Gastrocnemius medialis (tissue), 4 donors: ENCODE measurements at regions of chr11 and their contacts with region 1.

Region 1: DNA sequence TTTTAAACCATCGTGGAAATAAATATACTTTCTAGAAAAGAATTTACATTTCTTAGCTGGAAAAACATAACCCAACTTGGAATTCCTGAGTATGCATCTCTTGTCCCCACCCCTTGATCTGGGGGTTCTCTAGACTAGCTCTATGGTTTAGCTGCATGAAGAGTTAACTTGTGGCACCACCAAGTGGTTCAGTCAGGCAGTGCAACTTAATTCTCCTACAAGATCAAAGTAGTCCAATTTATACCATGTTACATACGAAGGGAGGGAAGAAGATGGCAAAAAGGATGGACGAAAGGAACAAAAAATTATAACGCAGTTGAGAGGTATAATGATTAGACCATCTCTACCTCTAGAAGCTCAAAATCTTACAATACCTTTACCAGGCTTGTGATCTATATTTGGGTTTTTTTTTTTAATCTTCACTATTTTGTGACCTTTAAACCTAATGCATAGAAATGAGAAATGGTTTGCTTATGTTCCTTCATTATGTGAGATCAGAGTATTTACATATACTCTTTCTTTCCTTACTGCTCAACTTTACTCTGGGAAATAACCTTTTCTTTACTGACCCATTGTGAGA is 28.5 kb upstream of the ALKBH3 start:
- DNase-seq: peak in 1 of 2 donors; percentile 39
- ATAC-seq: peak; percentile 58 to 80
- H3K4me3 ChIP-seq: no peak overlapping the region
- H3K27ac ChIP-seq: no peak overlapping the region
- H3K4me1 ChIP-seq: no peaks in the 10 kb centered on the region
- H3K27me3 ChIP-seq: no peaks in the 10 kb centered on the region
- CTCF ChIP-seq: peak; percentile 75 to 82 (median 80)
- POLR2A ChIP-seq: no peak

Region 2: DNA sequence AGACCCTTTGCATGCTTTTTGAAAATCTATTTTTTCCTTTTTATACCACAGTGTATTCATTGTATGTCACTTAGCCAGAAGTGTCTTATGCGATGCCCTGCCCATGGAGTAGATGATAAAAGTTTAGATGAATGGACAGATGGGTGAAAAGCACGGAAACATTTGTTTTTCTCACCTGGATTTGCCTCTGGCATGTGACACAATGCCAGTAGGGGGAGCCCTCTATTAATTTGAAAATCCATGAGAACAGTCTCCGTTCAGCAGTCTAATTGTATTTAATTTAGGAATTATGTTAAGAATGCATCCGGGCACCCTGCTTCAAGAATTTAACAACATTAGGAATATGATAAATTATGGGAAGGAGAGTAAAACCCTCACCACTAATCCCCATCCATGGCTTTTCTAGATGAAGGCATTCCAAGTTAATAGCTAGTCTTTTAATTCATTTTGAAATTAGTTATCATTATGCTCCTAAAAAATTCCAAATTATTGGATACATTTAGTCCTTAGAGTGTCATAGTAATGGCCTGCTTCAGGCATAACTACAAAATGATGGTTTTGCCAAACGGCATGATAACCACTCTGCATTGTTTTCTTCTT is 26.8 kb before region 1 on chr11:
- in situ Hi-C with region 1: no loop called
- intact Hi-C with region 1: loop called (anchors 1 kb)
- DNase-seq: no peak
- ATAC-seq: peak in 1 of 2 donors; percentile 58
- H3K4me3 ChIP-seq: no peak overlapping the region
- H3K27ac ChIP-seq: no peak overlapping the region
- H3K4me1 ChIP-seq: peaks cover 17 to 24% of the 10 kb centered on the region in 2 donors
- H3K27me3 ChIP-seq: no peaks in the 10 kb centered on the region
- CTCF ChIP-seq: peak; percentile 51 to 73 (median 59)
- POLR2A ChIP-seq: no peak